PC-3 (cell line): ENCODE measurements at regions of chr3 and their contacts with region 1.

Region 1: DNA sequence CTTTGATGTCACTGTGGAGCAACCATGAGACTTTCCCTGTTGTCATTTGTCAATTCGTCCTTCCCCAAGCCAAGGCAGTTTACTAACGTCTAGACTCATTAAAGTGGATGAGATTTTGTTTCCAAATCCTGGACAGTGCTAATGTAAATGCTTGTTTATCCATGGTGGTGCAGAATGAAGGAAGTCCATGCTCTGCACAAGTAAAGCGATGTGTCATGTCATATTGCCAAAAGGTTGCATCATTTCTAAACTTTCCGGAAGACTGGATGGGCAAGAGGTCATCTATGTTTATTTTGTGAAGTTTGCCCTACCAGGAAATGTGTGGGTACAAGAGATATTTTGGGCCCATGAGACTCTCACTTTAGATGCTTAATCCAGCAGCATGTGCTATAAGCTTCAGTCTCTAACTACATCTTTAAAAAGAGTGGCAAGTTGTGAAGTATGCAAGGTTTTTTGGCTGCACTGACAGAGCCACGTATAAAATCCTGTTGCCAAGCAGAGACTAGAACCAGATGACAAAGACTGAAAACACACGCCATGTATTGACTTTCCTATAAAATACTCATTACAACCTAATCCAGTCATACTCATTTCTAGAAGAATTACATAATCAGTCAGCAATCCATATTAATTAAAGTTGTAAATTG is 72.1 kb upstream of the FNDC3B start:
- DNase-seq: peak; percentile 82
- ATAC-seq: peak; percentile 80
- H3K4me3 ChIP-seq: peak overlapping the region; percentile 6; the same call in 1 of the 2 replicates
- H3K27ac ChIP-seq: peak overlapping the region; percentile 70
- H3K4me1 ChIP-seq: peaks cover 24% of the 10 kb centered on the region
- H3K27me3 ChIP-seq: no peaks in the 10 kb centered on the region
- CTCF ChIP-seq: no peak

Region 2: DNA sequence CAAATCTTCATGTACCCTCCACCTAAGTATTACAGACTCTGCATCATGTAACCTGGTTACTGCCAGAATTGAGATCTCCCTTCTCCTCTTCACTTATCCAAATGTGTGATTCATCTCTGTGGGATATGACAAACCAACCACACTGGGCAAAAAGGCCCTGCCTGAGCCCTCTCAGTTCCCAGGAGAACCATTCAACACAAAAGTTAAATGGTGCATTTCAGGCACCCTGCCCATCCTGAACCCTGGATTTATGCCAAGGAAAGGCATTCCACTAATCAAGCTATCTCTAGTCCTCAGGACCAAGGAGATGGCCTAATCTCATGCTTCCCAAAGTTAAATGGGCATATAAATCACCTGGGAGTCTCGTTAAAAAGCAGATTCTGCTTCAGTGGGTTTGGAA is 615.6 kb before region 1 on chr3:
- CTCF ChIA-PET with region 1: no interaction called
- POLR2A ChIA-PET with region 1: no interaction called
- intact Hi-C with region 1: no loop called
- DNase-seq: peak; percentile 98
- ATAC-seq: peak; percentile 76
- H3K4me3 ChIP-seq: no peak overlapping the region
- H3K27ac ChIP-seq: peak overlapping the region; percentile 76
- H3K4me1 ChIP-seq: peaks cover 80% of the 10 kb centered on the region
- H3K27me3 ChIP-seq: no peaks in the 10 kb centered on the region
- CTCF ChIP-seq: no peak

Region 3: DNA sequence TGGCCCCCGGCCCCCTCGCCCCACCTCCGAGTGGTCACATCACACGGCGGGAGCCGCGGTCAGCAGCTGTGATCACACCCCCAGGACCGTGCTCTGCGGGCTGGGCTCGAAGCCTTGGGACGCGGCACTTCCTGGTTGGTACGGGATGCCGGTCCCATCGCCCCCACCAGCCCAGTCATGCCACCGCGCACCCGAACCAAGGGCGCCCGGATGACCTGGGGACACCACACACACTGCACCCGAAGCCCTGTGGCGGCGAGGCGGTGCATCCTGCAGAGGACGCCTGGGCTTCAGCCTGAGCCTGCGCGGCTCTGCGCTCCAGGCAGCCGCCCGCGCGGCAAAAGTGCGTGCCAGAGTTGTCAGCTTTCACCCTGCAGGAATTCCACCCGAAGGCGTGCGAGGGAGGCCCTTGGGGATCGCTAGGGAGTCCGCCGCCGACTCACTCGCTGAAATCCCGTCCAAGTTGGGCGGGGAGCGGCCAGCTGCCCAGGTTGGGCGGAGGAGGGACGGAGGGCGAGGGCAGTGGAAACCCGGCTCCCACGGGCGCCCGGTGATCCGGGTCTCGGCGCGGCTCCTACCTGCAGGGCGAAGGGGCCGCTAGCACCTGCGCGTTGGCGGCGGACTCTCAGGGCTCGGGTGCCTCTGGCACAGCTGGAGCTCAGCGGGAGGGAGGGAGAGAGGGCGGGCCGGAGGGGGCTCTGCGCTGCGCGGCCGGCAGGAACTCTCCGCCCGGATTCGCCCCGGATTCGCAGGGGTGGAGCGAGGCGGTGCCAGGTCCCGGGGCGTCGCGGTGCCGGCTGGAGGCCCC is 157.2 kb before region 1 on chr3 and contains the start of gene PLD1:
- CTCF ChIA-PET with region 1: no interaction called
- POLR2A ChIA-PET with region 1: no interaction called
- intact Hi-C with region 1: loop called (anchors 5 kb)
- DNase-seq: peak; percentile 80
- ATAC-seq: peak; percentile 59
- H3K4me3 ChIP-seq: peak within 1 kb of the TSS; percentile 78
- H3K27ac ChIP-seq: peak within 1 kb of the TSS; percentile 90
- H3K4me1 ChIP-seq: peaks cover 50% of the 10 kb centered on the region
- H3K27me3 ChIP-seq: no peaks in the 10 kb centered on the region
- CTCF ChIP-seq: no peak
- total RNA-seq, gene PLD1: 7.3 and 8.3 TPM in 2 replicates

Region 4: DNA sequence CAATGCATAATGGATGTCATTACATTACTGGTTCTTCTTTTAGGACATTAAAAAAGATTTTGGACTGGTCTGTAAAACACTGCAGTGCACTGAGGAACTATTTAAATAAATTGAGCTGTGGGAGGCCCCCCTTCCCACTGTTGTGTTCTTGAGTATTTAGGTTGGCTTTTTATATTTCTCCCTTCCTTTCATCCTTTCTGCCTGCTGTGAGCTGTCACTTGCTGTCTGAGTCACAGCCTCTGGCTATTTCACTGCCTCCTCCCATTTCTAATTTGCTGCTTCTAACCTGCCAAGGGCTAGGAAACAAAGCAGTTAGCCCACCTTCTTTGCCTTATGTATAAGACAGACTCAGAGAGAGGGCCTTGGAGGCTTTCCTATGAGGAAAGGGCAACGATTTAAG is 16.9 kb before region 1 on chr3:
- CTCF ChIA-PET with region 1: no interaction called
- POLR2A ChIA-PET with region 1: interaction called, 3 read pairs
- intact Hi-C with region 1: loop called (anchors 2 kb)
- DNase-seq: peak; percentile 76
- ATAC-seq: peak; percentile 53
- H3K4me3 ChIP-seq: no peak overlapping the region
- H3K27ac ChIP-seq: peak overlapping the region; percentile 38
- H3K4me1 ChIP-seq: peaks cover 68% of the 10 kb centered on the region
- H3K27me3 ChIP-seq: no peaks in the 10 kb centered on the region
- CTCF ChIP-seq: no peak

Region 5: GRCh38 chr3:171994646-171995428 is 27.6 kb after region 1 on chr3:
- CTCF ChIA-PET with region 1: no interaction called
- POLR2A ChIA-PET with region 1: no interaction called
- intact Hi-C with region 1: loop called (anchors 1 kb)
- DNase-seq: peak; percentile 77
- ATAC-seq: peak; percentile 89
- H3K4me3 ChIP-seq: no peak overlapping the region
- H3K27ac ChIP-seq: no peak overlapping the region
- H3K4me1 ChIP-seq: peaks cover 15% of the 10 kb centered on the region
- H3K27me3 ChIP-seq: no peaks in the 10 kb centered on the region
- CTCF ChIP-seq: no peak

Region 6: GRCh38 chr3:172129870-172130683 is 162.8 kb after region 1 on chr3:
- CTCF ChIA-PET with region 1: no interaction called
- POLR2A ChIA-PET with region 1: no interaction called
- intact Hi-C with region 1: loop called (anchors 5 kb)
- DNase-seq: peak; percentile 98
- ATAC-seq: peak; percentile 90
- H3K4me3 ChIP-seq: peak overlapping the region; percentile 36; the same call in 1 of the 2 replicates
- H3K27ac ChIP-seq: peak overlapping the region; percentile 92
- H3K4me1 ChIP-seq: peaks cover 84% of the 10 kb centered on the region
- H3K27me3 ChIP-seq: no peaks in the 10 kb centered on the region
- CTCF ChIP-seq: no peak

Region 7: DNA sequence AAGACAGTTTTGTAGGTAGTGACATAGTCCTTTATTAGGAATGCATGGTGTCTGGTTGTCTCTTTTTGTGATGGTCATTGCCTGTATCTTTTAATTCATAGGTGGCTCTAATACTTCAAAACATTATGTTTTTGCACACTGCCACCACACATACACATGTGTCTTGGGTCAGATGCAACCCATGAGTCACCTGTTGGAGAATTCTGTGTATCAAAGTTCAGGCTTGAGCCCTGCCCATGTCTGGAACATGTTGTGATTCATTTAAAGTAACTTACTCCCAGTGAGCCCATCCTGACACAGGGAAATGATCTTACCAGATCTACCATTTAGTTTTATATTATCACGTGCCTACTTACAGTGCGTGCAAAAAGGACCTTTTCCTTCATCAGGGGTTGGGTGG is 338.3 kb after region 1 on chr3:
- CTCF ChIA-PET with region 1: no interaction called
- POLR2A ChIA-PET with region 1: no interaction called
- intact Hi-C with region 1: loop called (anchors 10 kb)
- DNase-seq: peak; percentile 83
- ATAC-seq: peak; percentile 95
- H3K4me3 ChIP-seq: no peak overlapping the region
- H3K27ac ChIP-seq: peak overlapping the region; percentile 32
- H3K4me1 ChIP-seq: peaks cover 25% of the 10 kb centered on the region
- H3K27me3 ChIP-seq: no peaks in the 10 kb centered on the region
- CTCF ChIP-seq: no peak

Region 8: DNA sequence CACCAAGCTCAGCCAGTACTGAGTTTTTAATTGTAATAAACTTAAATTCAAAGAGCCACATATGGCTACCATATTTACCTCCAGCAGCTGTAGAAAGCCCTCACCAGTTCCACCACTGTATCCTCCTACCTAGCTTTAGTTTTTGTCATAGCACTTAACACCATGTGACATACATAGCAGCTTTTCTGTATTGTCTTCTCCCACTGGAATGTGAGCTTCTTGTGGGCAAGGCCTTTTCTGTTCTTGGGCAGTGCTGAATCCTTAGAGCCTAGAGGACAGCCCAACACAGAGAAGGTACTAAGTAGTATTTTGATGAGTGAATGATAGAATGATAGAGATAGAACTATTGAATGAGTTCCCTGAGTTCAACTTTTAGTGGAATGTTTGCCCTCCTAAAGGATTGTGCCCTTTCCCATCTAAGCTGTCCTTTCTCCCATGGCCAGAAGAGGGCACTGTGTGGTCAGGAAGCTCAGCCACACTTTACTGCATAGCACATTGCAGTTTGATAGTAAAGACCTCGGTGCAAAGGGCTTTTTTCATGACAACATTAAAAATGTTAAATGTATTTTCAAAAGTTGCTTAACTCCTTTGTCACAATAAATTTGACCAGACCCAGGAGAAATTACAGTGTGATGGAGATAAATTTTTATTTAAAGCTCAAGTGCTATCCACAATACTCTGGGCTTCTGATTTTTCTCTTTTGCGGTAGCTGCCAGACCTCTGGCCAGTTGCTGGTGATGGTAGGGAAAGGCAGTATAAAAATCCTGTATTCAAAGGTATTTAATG is 365.2 kb after region 1 on chr3:
- CTCF ChIA-PET with region 1: no interaction called
- POLR2A ChIA-PET with region 1: interaction called, 17 read pairs
- intact Hi-C with region 1: no loop called
- DNase-seq: peak; percentile 75
- ATAC-seq: peak; percentile 94
- H3K4me3 ChIP-seq: no peak overlapping the region
- H3K27ac ChIP-seq: no peak overlapping the region
- H3K4me1 ChIP-seq: no peaks in the 10 kb centered on the region
- H3K27me3 ChIP-seq: no peaks in the 10 kb centered on the region
- CTCF ChIP-seq: peak; percentile 93

Region 9: GRCh38 chr3:172391592-172392302 is 424.5 kb after region 1 on chr3:
- CTCF ChIA-PET with region 1: no interaction called
- POLR2A ChIA-PET with region 1: no interaction called
- intact Hi-C with region 1: no loop called
- DNase-seq: no peak
- ATAC-seq: no peak
- H3K4me3 ChIP-seq: no peak overlapping the region
- H3K27ac ChIP-seq: no peak overlapping the region
- H3K4me1 ChIP-seq: no peaks in the 10 kb centered on the region
- H3K27me3 ChIP-seq: no peaks in the 10 kb centered on the region
- CTCF ChIP-seq: no peak